ENCODE measurements at regions of chr2 and their contacts with region 1.

Region 1: GRCh38 chr2:71331581-71332434 is at the start of gene ZNF638:
- DNase-seq: peak; percentile 83 to 98 (median 92)
- ATAC-seq: peak; percentile 97
- H3K4me3 ChIP-seq: peak within 1 kb of the TSS; percentile 98
- H3K4me3 Mint-ChIP-seq: peak within 1 kb of the TSS; percentile 100
- H3K27ac ChIP-seq: peak within 1 kb of the TSS; percentile 82 to 94
- H3K27ac Mint-ChIP-seq: peak within 1 kb of the TSS; percentile 99
- H3K4me1 ChIP-seq: peaks cover 27% of the 10 kb centered on the region
- H3K4me1 Mint-ChIP-seq: peaks cover 55% of the 10 kb centered on the region
- H3K27me3 ChIP-seq: no peaks in the 10 kb centered on the region
- H3K27me3 Mint-ChIP-seq: peaks cover 11% of the 10 kb centered on the region
- CTCF ChIP-seq: peak; percentile 80
- total RNA-seq, gene ZNF638: 77.8 to 86.4 TPM

Region 2: DNA sequence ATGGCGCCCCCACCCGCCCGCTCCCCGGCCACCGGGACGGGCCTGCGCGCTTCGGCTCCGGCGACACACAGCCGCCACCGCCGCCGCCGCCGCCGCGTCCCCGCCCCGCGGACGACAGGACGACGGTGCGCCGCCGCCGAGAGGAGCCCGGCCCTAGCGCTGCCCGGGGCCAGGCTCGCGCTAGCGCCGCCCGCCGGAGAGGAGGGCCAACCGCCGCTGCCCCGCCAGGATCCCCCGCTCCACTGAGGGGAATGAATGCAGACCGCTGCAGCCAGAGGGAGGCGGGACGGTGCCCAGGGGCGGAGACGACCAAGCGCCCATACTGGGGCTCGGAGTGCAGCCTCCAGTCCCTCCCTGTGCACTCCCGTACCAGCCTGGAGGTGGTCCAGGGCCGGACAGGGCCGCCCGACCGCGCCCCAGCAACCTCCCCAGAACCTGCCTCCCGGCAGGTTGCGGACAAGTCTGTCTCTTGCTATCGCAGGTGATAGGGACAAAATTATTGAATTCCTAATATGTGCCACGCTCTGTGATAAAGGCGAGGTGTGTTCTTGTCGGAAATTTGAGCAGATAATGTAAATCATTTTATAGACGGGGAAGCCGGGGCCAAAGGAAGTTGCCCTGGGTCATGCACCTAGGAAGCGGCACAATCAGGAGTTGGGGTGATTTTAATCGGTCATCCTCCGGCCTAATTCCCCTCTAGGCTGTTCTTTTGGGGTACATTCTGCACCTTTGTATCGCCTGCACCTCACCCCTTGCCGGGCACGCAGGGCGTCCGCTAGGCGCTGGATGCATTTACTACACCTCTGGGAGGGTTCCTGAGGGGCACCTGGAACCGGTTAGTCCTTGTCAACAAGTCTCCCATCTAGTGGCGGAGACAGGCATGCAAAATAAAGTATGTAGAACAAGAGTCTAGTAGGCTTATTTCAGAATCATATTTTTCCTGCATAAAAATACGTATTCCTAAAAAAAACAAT is 336.8 kb before region 1 on chr2 and contains the start of gene TEX261:
- CTCF ChIA-PET with region 1: no interaction called
- POLR2A ChIA-PET with region 1: no interaction called
- intact Hi-C with region 1: loop called in 1 of 2 experiments (anchors 5 kb)
- DNase-seq: peak; percentile 78 to 95 (median 89)
- ATAC-seq: peak; percentile 92
- H3K4me3 ChIP-seq: peak within 1 kb of the TSS; percentile 90
- H3K4me3 Mint-ChIP-seq: peak within 1 kb of the TSS; percentile 99
- H3K27ac ChIP-seq: peak within 1 kb of the TSS; percentile 35 to 62
- H3K27ac Mint-ChIP-seq: peak within 1 kb of the TSS; percentile 90
- H3K4me1 ChIP-seq: peaks cover 33% of the 10 kb centered on the region
- H3K4me1 Mint-ChIP-seq: peaks cover 37% of the 10 kb centered on the region
- H3K27me3 ChIP-seq: no peaks in the 10 kb centered on the region
- H3K27me3 Mint-ChIP-seq: no peaks in the 10 kb centered on the region
- CTCF ChIP-seq: peak; percentile 58
- total RNA-seq, gene TEX261: 26.8 to 34.0 TPM

Region 3: DNA sequence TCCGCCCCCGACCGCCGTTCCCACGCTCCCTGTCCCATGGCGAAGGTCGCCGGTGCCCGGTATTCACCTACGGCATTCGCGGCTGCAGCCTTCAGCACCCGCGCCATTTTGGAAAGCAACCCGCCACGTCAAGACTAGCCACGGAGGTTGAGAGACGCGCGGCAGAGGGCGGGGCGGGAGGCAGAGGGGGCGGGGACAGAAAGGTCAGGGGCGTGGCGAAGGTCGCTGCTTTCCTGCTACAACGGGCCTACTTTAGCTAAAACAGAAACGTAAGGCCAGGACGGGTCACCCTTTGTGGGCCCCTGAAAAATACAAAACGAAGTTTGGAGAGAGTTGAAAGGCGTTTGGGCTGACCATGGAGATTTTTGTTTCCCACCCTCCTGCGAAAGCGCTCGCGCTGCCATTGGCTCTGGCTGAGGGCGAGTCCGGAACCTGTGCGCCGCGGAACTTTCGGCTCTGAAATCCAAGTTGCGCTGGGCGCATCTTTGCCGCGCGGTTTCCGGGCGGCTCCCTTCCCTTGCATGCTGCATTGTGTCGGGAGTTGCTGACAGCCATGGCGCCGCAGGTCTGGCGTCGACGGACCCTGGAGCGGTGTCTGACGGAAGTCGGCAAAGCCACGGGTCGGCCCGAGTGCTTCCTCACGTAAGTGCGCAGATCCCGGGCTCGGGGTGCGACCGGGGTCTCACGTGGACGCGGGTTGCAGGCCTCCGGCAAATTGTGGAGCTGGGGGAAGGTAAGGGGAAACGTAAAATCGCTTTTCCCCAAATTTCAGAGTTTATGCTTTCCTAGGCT is 201.5 kb before region 1 on chr2 and contains the starts of genes MCEE and MPHOSPH10:
- CTCF ChIA-PET with region 1: interaction called, 3 read pairs
- POLR2A ChIA-PET with region 1: interaction called, 26 read pairs
- intact Hi-C with region 1: loop called in 1 of 2 experiments (anchors 5 kb)
- DNase-seq: peak; percentile 82 to 94 (median 88)
- ATAC-seq: peak; percentile 89
- H3K4me3 ChIP-seq: peak within 1 kb of the TSS; percentile 95
- H3K4me3 Mint-ChIP-seq: no peak within 1 kb of the TSS
- H3K27ac ChIP-seq: peak within 1 kb of the TSS; percentile 77 to 89
- H3K27ac Mint-ChIP-seq: no peak within 1 kb of the TSS
- H3K4me1 ChIP-seq: peaks cover 24% of the 10 kb centered on the region
- H3K4me1 Mint-ChIP-seq: peaks cover 36% of the 10 kb centered on the region
- H3K27me3 ChIP-seq: no peaks in the 10 kb centered on the region
- H3K27me3 Mint-ChIP-seq: no peaks in the 10 kb centered on the region
- CTCF ChIP-seq: no peak
- total RNA-seq, gene MCEE: 4.3 to 8.0 TPM
- total RNA-seq, gene MPHOSPH10: 36.7 to 38.2 TPM

Region 4: DNA sequence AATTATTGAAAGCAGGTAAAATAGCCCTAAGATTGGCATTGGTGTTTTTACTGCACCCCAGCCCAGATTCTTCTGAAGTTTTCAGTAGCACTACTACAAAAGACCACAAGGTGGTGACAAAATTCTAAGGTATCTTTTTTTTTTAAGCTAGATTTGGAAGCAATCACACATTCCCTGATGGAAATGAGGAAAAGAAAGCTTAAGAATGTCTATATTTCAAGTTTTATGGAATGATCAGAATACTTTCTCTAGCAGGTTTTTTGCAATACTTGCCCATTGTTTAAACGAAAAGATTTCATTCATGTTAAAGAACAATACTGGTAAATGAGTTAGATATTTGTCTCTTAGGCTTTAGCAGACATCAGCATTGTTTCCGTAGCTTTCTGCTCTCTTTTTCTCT is 32.3 kb before region 1 on chr2:
- CTCF ChIA-PET with region 1: interaction called, 12 read pairs
- POLR2A ChIA-PET with region 1: interaction called, 18 read pairs
- intact Hi-C with region 1: no loop called
- DNase-seq: peak in 3 of 14 experiments; percentile 34 to 66 (median 58)
- ATAC-seq: no peak
- H3K4me3 ChIP-seq: no peak overlapping the region
- H3K4me3 Mint-ChIP-seq: no peak overlapping the region
- H3K27ac ChIP-seq: no peak overlapping the region
- H3K27ac Mint-ChIP-seq: no peak overlapping the region
- H3K4me1 ChIP-seq: no peaks in the 10 kb centered on the region
- H3K4me1 Mint-ChIP-seq: no peaks in the 10 kb centered on the region
- H3K27me3 ChIP-seq: peaks cover 0 to 2% of the 10 kb centered on the region in 2 experiments
- H3K27me3 Mint-ChIP-seq: peaks cover 11% of the 10 kb centered on the region
- CTCF ChIP-seq: peak; percentile 89

Region 5: DNA sequence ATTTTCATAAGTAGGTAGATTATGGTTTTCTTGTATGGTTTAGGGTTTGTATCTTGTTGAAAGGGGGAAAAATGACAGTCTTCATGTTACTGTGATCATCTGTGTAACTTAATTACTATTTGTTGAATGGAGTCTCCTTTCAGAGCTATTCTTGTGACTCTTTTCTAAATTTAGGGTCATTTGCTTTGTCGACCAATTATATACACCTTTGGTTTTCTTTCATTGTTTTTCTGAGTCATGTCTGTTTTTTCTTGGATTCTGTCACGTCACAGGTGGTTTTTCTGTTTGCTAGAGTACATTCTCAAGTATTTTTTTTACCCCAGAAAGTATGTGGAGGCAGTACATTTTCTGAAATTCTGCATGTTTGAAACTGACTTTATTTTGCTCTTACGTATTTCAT is 77.8 kb after region 1 on chr2:
- CTCF ChIA-PET with region 1: no interaction called
- POLR2A ChIA-PET with region 1: interaction called, 7 read pairs
- intact Hi-C with region 1: loop called in 1 of 2 experiments (anchors 5 kb)
- DNase-seq: no peak
- ATAC-seq: no peak
- H3K4me3 ChIP-seq: no peak overlapping the region
- H3K4me3 Mint-ChIP-seq: no peak overlapping the region
- H3K27ac ChIP-seq: no peak overlapping the region
- H3K27ac Mint-ChIP-seq: peak overlapping the region; percentile 38
- H3K4me1 ChIP-seq: no peaks in the 10 kb centered on the region
- H3K4me1 Mint-ChIP-seq: no peaks in the 10 kb centered on the region
- H3K27me3 ChIP-seq: no peaks in the 10 kb centered on the region
- H3K27me3 Mint-ChIP-seq: no peaks in the 10 kb centered on the region
- CTCF ChIP-seq: no peak

Region 6: DNA sequence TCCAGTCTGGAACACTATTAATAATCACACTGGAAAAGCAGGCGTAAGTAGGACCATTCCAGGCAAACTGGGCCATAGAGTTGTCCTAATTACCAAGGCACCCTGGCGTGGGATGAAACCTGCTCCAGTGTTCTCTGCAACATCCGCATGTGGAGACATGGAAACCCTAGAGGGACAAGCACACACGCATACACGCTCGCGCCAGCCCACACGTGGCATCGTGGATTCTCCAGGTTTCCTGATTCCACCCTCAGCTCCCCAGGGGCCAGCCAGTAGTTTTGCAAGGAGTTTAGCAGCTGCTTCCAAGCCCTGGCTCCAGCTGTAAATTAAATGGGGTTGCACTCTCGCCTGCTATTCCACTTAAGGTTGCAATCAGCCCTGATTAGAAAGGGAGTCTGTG is 249.2 kb after region 1 on chr2:
- CTCF ChIA-PET with region 1: no interaction called
- POLR2A ChIA-PET with region 1: no interaction called
- intact Hi-C with region 1: no loop called
- DNase-seq: no peak
- ATAC-seq: no peak
- H3K4me3 ChIP-seq: no peak overlapping the region
- H3K4me3 Mint-ChIP-seq: no peak overlapping the region
- H3K27ac ChIP-seq: no peak overlapping the region
- H3K27ac Mint-ChIP-seq: no peak overlapping the region
- H3K4me1 ChIP-seq: no peaks in the 10 kb centered on the region
- H3K4me1 Mint-ChIP-seq: no peaks in the 10 kb centered on the region
- H3K27me3 ChIP-seq: no peaks in the 10 kb centered on the region
- H3K27me3 Mint-ChIP-seq: no peaks in the 10 kb centered on the region
- CTCF ChIP-seq: no peak

Measured in CD4-positive, alpha-beta T cell (primary cell).